Lower lobe of right lung (tissue), 2 donors: ENCODE measurements at regions of chr17 and their contacts with region 1.

Region 1: GRCh38 chr17:5584383-5585286 is at the start of gene NLRP1:
- DNase-seq: peak; percentile 94
- ATAC-seq: peak; percentile 94
- H3K4me3 ChIP-seq: peak within 1 kb of the TSS; percentile 65
- H3K27ac ChIP-seq: peak within 1 kb of the TSS; percentile 90
- H3K4me1 ChIP-seq: peaks cover 61% of the 10 kb centered on the region
- H3K27me3 ChIP-seq: no peaks in the 10 kb centered on the region
- CTCF ChIP-seq: no peak
- total RNA-seq, gene NLRP1: 40.3 TPM

Region 2: GRCh38 chr17:5526821-5527598 is 57.6 kb before region 1 on chr17:
- intact Hi-C with region 1: no loop called
- DNase-seq: no peak
- ATAC-seq: peak in 1 of 2 donors; percentile 39
- H3K4me3 ChIP-seq: no peak overlapping the region
- H3K27ac ChIP-seq: no peak overlapping the region
- H3K4me1 ChIP-seq: no peaks in the 10 kb centered on the region
- H3K27me3 ChIP-seq: no peaks in the 10 kb centered on the region
- CTCF ChIP-seq: no peak

Region 3: GRCh38 chr17:6427279-6427781 is 842.7 kb after region 1 on chr17:
- intact Hi-C with region 1: loop called (anchors 5 kb)
- DNase-seq: no peak
- ATAC-seq: peak in 1 of 2 donors; percentile 44
- H3K4me3 ChIP-seq: no peak overlapping the region
- H3K27ac ChIP-seq: no peak overlapping the region
- H3K4me1 ChIP-seq: no peaks in the 10 kb centered on the region
- H3K27me3 ChIP-seq: no peaks in the 10 kb centered on the region
- CTCF ChIP-seq: no peak